Endothelial cell of umbilical vein (primary cell): ENCODE measurements at regions of chr2 and their contacts with region 1.

Region 1: DNA sequence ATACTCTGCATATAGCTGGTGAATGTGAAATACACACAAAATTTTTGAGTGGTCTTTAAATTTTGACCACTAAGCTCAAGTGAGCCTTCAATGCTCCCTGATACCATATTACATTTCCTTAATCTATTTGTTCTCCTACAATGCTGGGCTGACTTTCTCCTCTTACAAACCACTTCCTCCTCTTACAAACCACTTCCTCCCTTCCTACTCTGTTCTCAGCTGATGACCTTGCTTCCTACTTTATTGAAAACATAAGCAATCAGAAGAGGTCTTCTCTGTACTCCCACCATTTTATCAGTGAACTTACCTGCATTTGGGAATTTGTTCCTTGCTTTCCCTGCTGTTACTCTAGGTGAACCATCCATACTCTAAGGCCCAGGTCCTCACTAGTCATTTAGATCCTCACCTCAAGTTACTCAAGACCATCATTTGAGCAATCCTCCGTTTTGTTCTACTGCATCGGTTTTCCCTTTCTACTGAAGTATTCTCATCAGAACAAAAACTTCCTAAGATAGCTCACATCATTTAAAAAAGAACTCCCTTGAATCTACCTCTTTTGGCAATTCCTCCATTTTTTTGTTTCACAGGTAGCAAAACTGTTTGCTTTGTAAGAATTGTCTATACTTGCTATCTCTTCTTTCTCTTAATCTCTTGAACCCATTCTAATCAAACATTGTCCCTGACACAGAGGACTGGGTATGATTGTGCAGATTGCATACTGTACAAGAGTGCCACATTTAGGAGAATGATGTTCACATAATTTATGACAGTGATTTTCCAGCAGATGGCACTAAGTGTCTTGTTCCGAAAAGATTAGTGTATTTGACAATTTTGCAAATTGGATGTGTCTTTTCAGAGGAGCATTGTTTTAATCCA is 96.5 kb downstream of the EPB41L5 start:
- DNase-seq: peak; percentile 64
- H3K4me3 ChIP-seq: no peak overlapping the region
- H3K27ac ChIP-seq: no peak overlapping the region
- H3K4me1 ChIP-seq: peaks cover 26% of the 10 kb centered on the region
- H3K27me3 ChIP-seq: no peaks in the 10 kb centered on the region
- CTCF ChIP-seq: peak; percentile 18 to 30
- POLR2A ChIP-seq: no peak

Region 2: GRCh38 chr2:119702918-119703401 is 406.5 kb before region 1 on chr2:
- CTCF ChIA-PET with region 1: interaction called, 17 read pairs
- POLR2A ChIA-PET with region 1: no interaction called
- dilution Hi-C with region 1: no loop called
- intact Hi-C with region 1: loop called (anchors 1 kb)
- DNase-seq: peak; percentile 67
- H3K4me3 ChIP-seq: no peak overlapping the region
- H3K27ac ChIP-seq: no peak overlapping the region
- H3K4me1 ChIP-seq: no peaks in the 10 kb centered on the region
- H3K27me3 ChIP-seq: no peaks in the 10 kb centered on the region
- CTCF ChIP-seq: peak; percentile 96
- POLR2A ChIP-seq: no peak

Region 3: DNA sequence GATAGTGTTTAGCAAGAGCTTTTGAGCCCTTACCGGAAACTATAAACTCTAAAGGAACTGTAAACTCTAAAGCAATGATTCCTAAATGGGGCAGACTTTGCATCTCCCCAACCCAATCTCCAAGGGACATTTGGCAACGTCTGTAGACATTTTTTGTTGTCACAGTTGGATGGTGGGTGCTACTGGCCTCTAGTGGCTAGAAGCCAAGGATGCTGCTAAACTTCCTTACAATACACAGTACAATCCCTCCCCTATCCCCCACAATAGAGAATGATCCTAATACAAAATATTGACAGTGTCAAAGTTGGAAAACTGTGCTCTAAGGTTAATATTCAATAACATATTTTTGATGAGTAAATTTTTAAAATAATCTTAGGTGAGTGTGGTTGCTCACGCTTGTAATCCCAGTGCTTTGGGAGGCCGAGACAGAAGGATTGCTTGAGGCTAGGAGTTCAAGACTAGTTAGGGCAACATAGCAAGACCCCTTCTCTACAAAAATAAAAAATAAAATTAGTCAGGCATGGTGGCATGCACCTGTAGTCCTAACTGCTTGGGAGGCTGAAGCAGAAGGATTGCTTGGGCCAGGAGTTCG is 283.0 kb before region 1 on chr2:
- CTCF ChIA-PET with region 1: interaction called, 4 read pairs
- POLR2A ChIA-PET with region 1: no interaction called
- dilution Hi-C with region 1: no loop called
- intact Hi-C with region 1: loop called (anchors 10 kb)
- DNase-seq: peak; percentile 49
- H3K4me3 ChIP-seq: no peak overlapping the region
- H3K27ac ChIP-seq: no peak overlapping the region
- H3K4me1 ChIP-seq: peaks cover 9% of the 10 kb centered on the region
- H3K27me3 ChIP-seq: no peaks in the 10 kb centered on the region
- CTCF ChIP-seq: peak; percentile 68 to 71
- POLR2A ChIP-seq: no peak

Region 4: GRCh38 chr2:120077896-120078295 is 31.5 kb before region 1 on chr2:
- CTCF ChIA-PET with region 1: no interaction called
- POLR2A ChIA-PET with region 1: no interaction called
- dilution Hi-C with region 1: no loop called
- intact Hi-C with region 1: no loop called
- DNase-seq: no peak
- H3K4me3 ChIP-seq: no peak overlapping the region
- H3K27ac ChIP-seq: no peak overlapping the region
- H3K4me1 ChIP-seq: no peaks in the 10 kb centered on the region
- H3K27me3 ChIP-seq: no peaks in the 10 kb centered on the region
- CTCF ChIP-seq: no peak
- POLR2A ChIP-seq: no peak

Region 5: DNA sequence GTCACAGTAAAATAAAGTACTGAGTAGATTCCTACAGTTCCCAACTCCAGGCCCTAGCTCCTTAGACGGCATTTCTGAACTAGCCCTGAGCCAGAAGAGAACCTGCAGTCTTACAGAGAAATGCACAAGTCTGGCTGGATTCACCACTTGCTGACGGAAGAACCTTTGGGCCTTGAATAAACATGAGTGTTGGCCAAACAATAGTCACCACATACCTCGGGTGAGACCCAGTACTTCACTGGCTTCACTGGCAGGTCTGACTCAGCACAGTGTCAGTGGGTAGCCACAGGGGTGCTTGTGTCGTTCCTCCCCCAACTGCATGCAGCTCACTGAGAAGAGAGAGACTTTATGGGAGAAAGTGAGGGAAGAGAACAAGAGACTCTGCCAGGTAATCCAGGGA is 24.8 kb after region 1 on chr2:
- CTCF ChIA-PET with region 1: interaction called, 38 read pairs
- POLR2A ChIA-PET with region 1: interaction called, 6 read pairs
- dilution Hi-C with region 1: no loop called
- intact Hi-C with region 1: loop called (anchors 1 kb)
- DNase-seq: peak; percentile 89
- H3K4me3 ChIP-seq: no peak overlapping the region
- H3K27ac ChIP-seq: peak overlapping the region; percentile 82
- H3K4me1 ChIP-seq: peaks cover 37% of the 10 kb centered on the region
- H3K27me3 ChIP-seq: no peaks in the 10 kb centered on the region
- CTCF ChIP-seq: no peak
- POLR2A ChIP-seq: peak; percentile 61